ENCODE measurements at regions of chr13 and their contacts with region 1.

Region 1: GRCh38 chr13:102773441-102774215 is at the start of gene TEX30:
- DNase-seq: peak; percentile 90
- H3K4me3 Mint-ChIP-seq: peak within 1 kb of the TSS; percentile 85
- H3K27ac Mint-ChIP-seq: peak within 1 kb of the TSS; percentile 89
- H3K4me1 Mint-ChIP-seq: peaks cover 61% of the 10 kb centered on the region
- H3K27me3 Mint-ChIP-seq: no peaks in the 10 kb centered on the region
- total RNA-seq, gene TEX30: 35.0 to 36.6 TPM

Region 2: DNA sequence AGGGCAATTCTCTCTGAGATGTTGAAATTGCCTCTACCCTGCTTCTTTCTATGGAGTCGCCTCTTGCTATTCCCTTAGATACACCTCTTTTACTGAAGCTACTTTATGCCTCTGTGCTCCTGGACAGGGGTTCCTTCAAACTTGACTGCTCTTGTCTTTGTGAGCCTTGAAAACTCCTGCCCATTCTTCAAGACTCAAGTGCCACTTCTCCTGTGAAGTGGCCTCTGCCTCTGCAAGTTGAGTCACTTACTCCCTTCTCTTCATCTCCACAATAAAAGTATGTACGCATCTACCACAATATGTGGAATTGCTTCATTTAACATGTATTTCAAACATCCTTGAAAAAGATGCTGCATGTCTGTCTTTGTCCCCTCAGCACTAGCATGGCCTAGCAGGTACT is 242.9 kb before region 1 on chr13:
- CTCF ChIA-PET with region 1: no interaction called
- POLR2A ChIA-PET with region 1: no interaction called
- DNase-seq: no peak
- H3K4me3 Mint-ChIP-seq: no peak overlapping the region
- H3K27ac Mint-ChIP-seq: no peak overlapping the region
- H3K4me1 Mint-ChIP-seq: no peaks in the 10 kb centered on the region
- H3K27me3 Mint-ChIP-seq: peaks cover 3% of the 10 kb centered on the region

Region 3: DNA sequence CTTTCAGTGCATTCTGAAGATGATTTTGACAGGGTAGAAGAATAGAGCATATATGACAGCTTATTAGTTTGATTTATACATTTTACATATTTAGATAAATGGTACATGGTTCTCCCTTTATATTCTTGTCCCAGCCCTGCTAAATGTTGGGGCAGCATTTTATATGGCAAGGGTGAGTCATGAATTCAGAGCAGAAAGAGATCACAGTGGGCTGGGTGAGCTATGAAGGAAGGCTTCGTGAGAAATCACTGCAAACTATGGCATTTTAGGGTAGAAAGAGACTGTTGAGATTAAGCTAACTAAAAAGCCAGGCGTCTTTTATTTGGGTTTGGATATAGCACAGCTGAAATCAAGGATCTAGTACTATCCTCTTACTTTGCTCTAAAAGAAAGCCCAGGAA is 54.9 kb before region 1 on chr13:
- CTCF ChIA-PET with region 1: no interaction called
- POLR2A ChIA-PET with region 1: no interaction called
- DNase-seq: no peak
- H3K4me3 Mint-ChIP-seq: no peak overlapping the region
- H3K27ac Mint-ChIP-seq: no peak overlapping the region
- H3K4me1 Mint-ChIP-seq: peaks cover 4% of the 10 kb centered on the region
- H3K27me3 Mint-ChIP-seq: peaks cover 8% of the 10 kb centered on the region

Region 4: DNA sequence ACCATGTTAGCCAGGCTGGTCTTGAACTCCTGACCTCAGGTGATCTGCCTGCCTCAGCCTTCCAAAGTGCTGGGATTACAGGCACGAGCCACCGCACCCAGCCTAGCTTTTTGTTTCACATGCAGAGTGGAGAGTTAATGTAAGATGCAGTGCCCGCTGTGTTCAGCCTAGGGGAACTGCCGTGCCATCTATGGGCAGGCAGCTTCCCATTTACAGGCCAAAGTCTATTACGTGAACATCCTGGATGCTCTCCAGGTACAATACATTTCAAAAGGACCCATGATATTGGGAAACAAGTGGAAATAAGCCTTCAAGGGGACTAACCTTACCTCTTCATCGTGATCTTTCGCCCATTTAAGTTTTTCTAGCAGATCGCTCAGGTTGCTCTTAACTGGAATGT is 15.1 kb after region 1 on chr13:
- CTCF ChIA-PET with region 1: interaction called, 7 read pairs
- POLR2A ChIA-PET with region 1: interaction called, 17 read pairs
- DNase-seq: no peak
- H3K4me3 Mint-ChIP-seq: no peak overlapping the region
- H3K27ac Mint-ChIP-seq: no peak overlapping the region
- H3K4me1 Mint-ChIP-seq: no peaks in the 10 kb centered on the region
- H3K27me3 Mint-ChIP-seq: no peaks in the 10 kb centered on the region

Region 5: DNA sequence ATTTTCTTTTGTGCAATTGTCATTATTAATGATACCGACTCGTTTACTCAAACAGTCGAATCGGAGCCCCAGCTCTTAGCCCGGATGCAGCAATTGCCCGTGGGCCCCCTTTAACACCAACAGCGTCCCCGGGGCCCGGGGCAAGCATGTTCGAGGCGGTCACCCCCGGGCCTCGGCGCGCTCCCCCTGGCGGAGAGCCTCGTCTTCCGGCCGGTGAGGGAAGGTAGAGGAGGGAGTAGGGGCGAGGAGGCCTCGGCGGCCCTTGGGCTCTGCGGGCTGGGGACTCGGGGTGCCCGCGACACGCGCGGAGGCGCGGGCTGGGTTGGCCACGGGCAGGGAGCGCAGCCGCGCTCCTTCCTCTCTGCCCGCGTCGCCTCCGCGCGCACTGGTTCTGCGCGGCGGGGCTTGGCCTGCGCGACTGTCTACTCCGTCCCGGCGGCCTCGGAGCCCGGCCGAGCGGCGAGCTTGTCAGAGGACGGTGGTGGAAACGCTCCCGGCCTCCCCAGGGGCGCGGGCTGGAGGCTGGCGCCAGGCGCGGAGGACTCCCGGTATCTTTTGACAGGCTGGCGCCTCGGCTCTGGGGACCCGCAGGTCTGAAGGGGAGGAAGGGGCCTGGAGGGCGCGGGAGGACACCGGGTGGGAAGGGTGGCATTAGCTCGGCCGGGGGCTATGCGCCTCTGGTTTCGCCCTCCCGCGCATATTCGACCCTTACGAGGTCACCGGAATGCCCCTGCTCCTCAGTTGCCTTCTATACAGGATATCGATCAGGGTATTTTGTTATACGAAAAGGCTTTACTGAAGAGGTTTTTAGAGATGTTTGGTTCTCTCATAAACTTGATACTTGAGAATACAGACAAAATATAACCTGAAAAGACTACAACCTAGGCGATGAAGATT is 26.8 kb after region 1 on chr13:
- CTCF ChIA-PET with region 1: interaction called, 37 read pairs
- POLR2A ChIA-PET with region 1: interaction called, 107 read pairs
- DNase-seq: peak; percentile 89
- H3K4me3 Mint-ChIP-seq: peak overlapping the region; percentile 90
- H3K27ac Mint-ChIP-seq: peak overlapping the region; percentile 74
- H3K4me1 Mint-ChIP-seq: peaks cover 47% of the 10 kb centered on the region
- H3K27me3 Mint-ChIP-seq: no peaks in the 10 kb centered on the region

Region 6: GRCh38 chr13:102856557-102856956 is 82.9 kb after region 1 on chr13:
- CTCF ChIA-PET with region 1: no interaction called
- POLR2A ChIA-PET with region 1: no interaction called
- DNase-seq: no peak
- H3K4me3 Mint-ChIP-seq: no peak overlapping the region
- H3K27ac Mint-ChIP-seq: no peak overlapping the region
- H3K4me1 Mint-ChIP-seq: peaks cover 13% of the 10 kb centered on the region
- H3K27me3 Mint-ChIP-seq: no peaks in the 10 kb centered on the region

Region 7: DNA sequence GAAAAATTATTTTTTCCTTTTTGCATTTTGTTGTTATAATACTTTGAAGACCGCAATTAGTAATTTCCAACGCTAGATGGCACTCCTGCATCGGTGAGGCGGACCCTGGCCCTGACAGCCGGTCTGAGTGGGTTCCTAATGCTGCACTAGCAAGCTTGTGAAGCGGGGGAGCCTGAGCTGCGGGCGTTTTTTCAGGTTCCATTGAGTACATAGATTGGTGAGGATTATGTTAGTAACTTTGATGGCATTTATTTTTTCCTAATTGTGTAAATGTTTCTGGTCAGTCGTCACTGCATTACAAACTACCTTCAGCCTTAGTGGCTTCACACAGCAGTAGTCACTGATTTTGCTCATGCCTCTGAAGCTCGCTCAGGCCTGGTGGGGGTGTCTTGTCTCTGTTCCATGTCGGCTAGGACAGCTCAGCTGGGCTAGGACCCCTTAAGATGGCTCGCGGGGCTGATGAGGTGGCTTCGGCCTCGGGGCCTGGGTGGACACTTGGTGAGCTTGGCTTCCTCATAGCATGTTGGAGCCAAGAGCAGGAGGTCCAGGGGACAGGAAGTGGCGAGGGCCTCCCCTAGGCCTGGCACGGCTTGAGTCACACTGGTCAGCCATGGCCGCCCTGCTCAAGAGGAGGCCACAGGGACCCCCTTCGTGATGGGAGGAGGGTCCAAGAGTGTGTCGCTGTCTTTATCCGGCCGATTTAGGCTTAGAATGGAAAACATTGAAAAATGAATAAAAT is 97.2 kb after region 1 on chr13:
- CTCF ChIA-PET with region 1: no interaction called
- POLR2A ChIA-PET with region 1: no interaction called
- DNase-seq: peak; percentile 50
- H3K4me3 Mint-ChIP-seq: no peak overlapping the region
- H3K27ac Mint-ChIP-seq: no peak overlapping the region
- H3K4me1 Mint-ChIP-seq: peaks cover 31% of the 10 kb centered on the region
- H3K27me3 Mint-ChIP-seq: no peaks in the 10 kb centered on the region

Measured in activated CD4-positive, alpha-beta memory T cell treated with anti-CD3 and anti-CD28 coated beads, Interleukin-2, amount 10 ng/mL, durations not matched to agents 7 days and 5 days (primary cell).